Caco-2 (cell line): ENCODE measurements at regions of chr15 and their contacts with region 1.

Region 1: GRCh38 chr15:47218295-47218694 is 499.0 kb upstream of the SEMA6D start:
- DNase-seq: no peak
- H3K4me3 ChIP-seq: no peak overlapping the region
- H3K4me3 Mint-ChIP-seq: no peak overlapping the region
- H3K27ac Mint-ChIP-seq: no peak overlapping the region
- H3K4me1 ChIP-seq: no peaks in the 10 kb centered on the region
- H3K4me1 Mint-ChIP-seq: no peaks in the 10 kb centered on the region
- H3K27me3 ChIP-seq: no peaks in the 10 kb centered on the region
- H3K27me3 Mint-ChIP-seq: peaks cover 5% of the 10 kb centered on the region
- CTCF ChIP-seq: no peak

Region 2: GRCh38 chr15:47331841-47332393 is 113.6 kb after region 1 on chr15:
- CTCF ChIA-PET with region 1: no interaction called
- POLR2A ChIA-PET with region 1: no interaction called
- intact Hi-C with region 1: loop called (anchors 10 kb)
- DNase-seq: no peak
- H3K4me3 ChIP-seq: no peak overlapping the region
- H3K4me3 Mint-ChIP-seq: no peak overlapping the region
- H3K27ac Mint-ChIP-seq: no peak overlapping the region
- H3K4me1 ChIP-seq: peaks cover 26% of the 10 kb centered on the region
- H3K4me1 Mint-ChIP-seq: peaks cover 13% of the 10 kb centered on the region
- H3K27me3 ChIP-seq: no peaks in the 10 kb centered on the region; the same call in 1 of the 2 replicates
- H3K27me3 Mint-ChIP-seq: no peaks in the 10 kb centered on the region
- CTCF ChIP-seq: no peak